Endothelial cell of umbilical vein (primary cell): ENCODE measurements at regions of chr1 and their contacts with region 1.

Region 1: DNA sequence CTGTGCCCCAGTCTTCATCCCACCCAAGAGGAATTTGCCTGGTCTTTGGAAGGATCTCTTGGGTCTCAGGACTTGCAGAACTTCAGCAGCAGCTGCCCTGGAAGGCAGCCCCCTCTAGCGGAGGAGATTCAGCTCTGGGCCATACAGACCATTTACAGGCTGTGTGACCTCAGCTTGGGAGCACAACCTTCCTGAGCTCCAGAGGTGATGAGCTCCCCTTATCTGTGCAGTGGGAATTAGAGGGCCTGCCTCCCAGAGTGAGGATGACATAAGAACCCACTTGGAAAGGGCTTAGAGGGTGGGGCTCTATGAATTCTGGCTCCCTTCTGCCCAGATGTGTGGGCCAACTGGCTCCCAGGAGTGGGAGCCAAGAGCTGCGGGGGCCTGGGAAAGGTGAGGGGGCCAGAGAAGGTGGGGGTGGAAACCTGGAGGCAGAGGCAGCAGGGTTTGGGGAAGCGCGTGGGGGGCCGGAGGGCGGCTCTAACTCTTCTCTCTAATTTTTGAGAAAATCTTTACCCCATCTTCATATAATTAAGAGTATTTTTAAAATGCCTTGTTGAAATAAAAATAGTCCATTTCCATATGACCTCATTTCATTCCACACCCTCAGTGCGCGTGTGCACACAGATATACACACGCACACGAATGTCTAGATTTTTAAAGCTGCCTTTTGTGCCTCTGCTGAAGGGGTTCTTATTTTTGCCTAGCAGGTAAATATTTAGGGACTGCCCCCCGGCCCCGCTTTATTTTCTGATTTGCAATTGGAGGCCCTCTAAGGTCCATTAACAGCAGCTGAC is 21.5 kb downstream of the EPHB2 start:
- DNase-seq: no peak
- H3K4me3 ChIP-seq: no peak overlapping the region
- H3K27ac ChIP-seq: no peak overlapping the region
- H3K4me1 ChIP-seq: no peaks in the 10 kb centered on the region
- H3K27me3 ChIP-seq: no peaks in the 10 kb centered on the region
- CTCF ChIP-seq: peak; percentile 24 to 44
- POLR2A ChIP-seq: no peak

Region 2: DNA sequence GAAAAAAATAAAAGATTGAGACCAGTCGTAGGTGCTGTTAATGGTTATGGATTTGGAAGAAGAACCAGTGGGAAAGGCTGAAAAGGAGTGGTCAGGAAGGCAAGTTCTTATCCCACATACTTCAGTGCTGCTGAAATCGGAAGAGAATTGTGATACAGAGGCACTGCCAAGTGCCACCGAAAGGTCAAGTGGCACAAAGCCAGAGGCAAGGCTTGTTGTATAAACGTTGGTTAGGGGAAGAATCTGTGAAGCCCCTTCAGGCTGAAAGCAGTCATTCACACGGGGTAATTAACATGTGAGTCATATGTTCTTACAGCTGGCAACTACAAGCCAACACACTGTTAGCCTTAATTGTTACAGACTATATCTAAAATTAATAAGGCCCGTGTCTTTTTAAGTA is 231.7 kb before region 1 on chr1:
- CTCF ChIA-PET with region 1: no interaction called
- POLR2A ChIA-PET with region 1: no interaction called
- dilution Hi-C with region 1: no loop called
- intact Hi-C with region 1: no loop called
- DNase-seq: peak; percentile 97
- H3K4me3 ChIP-seq: no peak overlapping the region
- H3K27ac ChIP-seq: no peak overlapping the region
- H3K4me1 ChIP-seq: peaks cover 16% of the 10 kb centered on the region
- H3K27me3 ChIP-seq: no peaks in the 10 kb centered on the region
- CTCF ChIP-seq: peak in 1 of 2 donors; percentile 5
- POLR2A ChIP-seq: no peak

Region 3: DNA sequence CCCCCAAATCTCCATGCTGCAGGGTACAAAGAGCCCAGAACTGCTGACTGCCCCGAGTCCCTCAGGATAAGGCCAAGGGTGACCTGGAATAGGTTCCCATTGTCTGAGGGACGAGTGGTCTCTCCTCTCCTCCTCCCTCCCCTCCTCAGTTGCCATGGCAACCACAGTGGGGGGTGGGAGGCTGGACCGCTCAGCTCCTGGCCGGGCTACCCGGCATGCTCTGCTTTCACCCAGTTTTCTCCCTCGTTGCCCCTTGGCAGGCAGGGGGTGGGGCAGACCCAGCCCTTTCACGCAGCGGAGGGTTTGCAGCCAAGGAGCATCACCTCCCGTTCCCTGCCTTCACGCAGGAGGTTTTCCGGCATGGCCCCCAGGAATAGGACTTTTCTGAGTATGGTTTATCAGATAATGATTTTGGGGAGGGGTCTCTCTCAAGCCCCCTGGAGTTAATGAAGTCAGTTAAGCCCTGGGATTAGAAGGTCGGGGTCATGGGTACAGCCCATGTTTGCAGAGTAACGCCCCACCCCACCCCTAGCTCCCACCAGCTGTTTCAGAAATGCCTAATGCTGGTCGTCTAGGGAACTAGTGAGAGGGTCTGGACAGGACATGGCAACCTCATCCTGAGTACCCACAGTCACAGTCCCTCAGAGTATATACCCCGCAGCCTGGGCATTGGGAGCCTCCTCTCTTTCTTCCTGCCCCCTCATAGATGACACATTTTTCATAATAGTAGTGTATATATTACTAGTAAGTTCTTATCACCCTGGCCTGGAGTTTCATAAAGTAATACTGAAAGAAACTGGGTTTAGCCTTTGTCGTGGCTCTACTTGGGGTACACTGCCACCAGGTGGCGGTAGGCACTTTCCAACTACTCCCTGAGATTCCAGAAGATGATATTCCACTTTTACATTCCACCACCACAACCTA is 58.4 kb before region 1 on chr1:
- CTCF ChIA-PET with region 1: interaction called, 4 read pairs
- POLR2A ChIA-PET with region 1: no interaction called
- dilution Hi-C with region 1: no loop called
- intact Hi-C with region 1: loop called (anchors 2 kb)
- DNase-seq: peak; percentile 74
- H3K4me3 ChIP-seq: no peak overlapping the region
- H3K27ac ChIP-seq: no peak overlapping the region
- H3K4me1 ChIP-seq: peaks cover 10% of the 10 kb centered on the region
- H3K27me3 ChIP-seq: peaks cover 11 to 12% of the 10 kb centered on the region in 2 experiments
- CTCF ChIP-seq: peak; percentile 67 to 86
- POLR2A ChIP-seq: no peak